ENCODE measurements at regions of chr9 and their contacts with region 1.

Region 1: GRCh38 chr9:19379697-19380046 is 364 bp downstream of the RPS6 start:
- DNase-seq: no peak
- ATAC-seq: peak; percentile 53 to 61

Region 2: DNA sequence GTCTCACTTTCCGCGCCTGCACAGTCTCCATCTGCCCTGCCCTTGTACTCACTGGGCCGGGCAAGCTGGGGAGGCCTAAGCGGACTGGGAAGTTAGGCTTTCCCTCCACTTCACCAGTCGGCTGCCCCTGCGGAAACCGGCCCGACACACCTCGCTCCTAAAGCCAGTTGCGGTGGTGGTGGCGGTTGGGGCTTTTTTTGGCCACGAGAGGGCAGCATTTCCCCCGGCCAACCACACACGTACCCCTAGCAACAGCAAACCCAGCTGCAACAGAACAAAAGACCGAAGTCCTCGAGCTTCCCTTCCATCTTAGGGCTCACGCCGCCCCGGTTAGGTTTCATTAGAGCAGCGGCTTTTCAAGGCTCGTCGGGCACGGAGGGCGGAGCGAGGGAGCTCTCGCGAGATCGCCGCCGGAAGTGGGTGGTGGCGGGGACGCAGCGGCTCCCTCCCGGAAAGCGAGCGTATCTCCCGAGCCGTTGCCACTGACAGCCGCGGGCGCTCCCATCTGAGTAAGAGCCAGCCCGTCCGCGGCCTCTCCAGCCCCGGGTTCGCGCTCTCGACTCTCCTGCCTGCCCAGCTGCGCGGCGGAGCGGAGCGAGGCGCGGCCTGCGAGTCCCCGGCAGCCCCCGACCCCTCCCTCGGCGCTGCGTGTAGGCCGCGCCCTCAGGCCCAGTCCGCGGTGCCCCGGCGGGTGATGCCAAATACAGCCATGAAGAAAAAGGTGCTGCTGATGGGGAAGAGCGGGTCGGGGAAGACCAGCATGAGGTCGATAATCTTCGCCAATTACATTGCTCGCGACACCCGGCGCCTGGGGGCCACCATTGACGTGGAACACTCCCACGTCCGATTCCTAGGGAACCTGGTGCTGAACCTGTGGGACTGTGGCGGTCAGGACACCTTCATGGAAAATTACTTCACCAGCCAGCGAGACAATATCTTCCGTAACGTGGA is 330.4 kb before region 1 on chr9 and contains the start of gene RRAGA:
- intact Hi-C with region 1: loop called in 1 of 2 experiments (anchors 5 kb)
- DNase-seq: peak; percentile 94
- ATAC-seq: peak; percentile 96 to 97
- total RNA-seq, gene RRAGA: 72.1 to 94.6 TPM

Region 3: GRCh38 chr9:19102631-19103345 is 276.9 kb before region 1 on chr9 and contains the start of gene HAUS6:
- intact Hi-C with region 1: loop called in 1 of 2 experiments (anchors 10 kb)
- DNase-seq: peak; percentile 97
- ATAC-seq: peak; percentile 99 to 100
- total RNA-seq, gene HAUS6: 6.8 to 11.7 TPM

Region 4: GRCh38 chr9:19456996-19457692 is 77.5 kb after region 1 on chr9:
- intact Hi-C with region 1: loop called in 1 of 2 experiments (anchors 5 kb)
- DNase-seq: peak; percentile 55
- ATAC-seq: peak; percentile 92 to 97